Esophagus muscularis mucosa (tissue), 4 donors: ENCODE measurements at regions of chr1 and their contacts with region 1.

Region 1: DNA sequence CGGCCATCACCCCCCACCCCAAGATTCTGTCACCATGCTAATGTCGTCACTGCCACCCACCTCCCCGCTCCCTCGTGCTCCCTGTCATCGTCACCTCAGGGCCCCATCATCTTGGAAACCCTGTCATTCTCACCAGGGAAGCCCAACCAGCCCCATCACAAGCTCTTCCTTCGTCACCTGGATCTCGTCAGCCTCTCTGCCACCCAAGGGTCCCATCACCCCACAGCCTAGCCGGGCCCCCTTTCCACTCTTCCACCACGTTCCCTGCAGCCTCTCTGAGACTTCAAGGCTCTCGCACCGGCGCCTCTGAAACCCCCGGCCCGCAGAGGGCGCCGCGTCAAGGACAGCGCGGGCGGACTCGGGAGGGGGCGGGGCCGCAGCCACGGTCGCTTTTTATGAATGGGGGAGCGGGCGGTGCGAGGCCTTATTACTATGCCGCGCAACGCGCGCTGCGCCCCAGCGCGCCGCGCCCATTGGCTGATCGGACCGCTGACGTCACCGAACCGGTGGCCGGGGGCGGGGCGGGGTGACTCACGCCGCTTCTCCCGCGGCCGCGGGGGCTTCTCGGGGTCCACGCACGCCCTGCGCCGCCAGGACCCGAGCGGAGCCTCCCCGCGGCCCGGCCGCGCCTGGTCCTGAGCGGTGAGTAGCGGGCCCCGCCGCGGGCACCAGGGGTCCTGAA is at the start of gene GPR3:
- DNase-seq: peak; percentile 98
- H3K4me3 ChIP-seq: peak within 1 kb of the TSS; percentile 55 to 68 (median 58)
- H3K27ac ChIP-seq: peak within 1 kb of the TSS; percentile 66 to 77 (median 70)
- H3K4me1 ChIP-seq: peaks cover 32 to 50% (median 38%) of the 10 kb centered on the region in 4 donors
- H3K27me3 ChIP-seq: no peaks in the 10 kb centered on the region
- CTCF ChIP-seq: peak; percentile 53 to 75 (median 56)
- EP300 ChIP-seq: no peak
- POLR2A ChIP-seq: no peak
- total RNA-seq, gene GPR3: 0.13 to 4.5 TPM in 2 of 4 donors, not detected in the others

Region 2: GRCh38 chr1:27300341-27301051 is 91.7 kb before region 1 on chr1:
- intact Hi-C with region 1: loop called (anchors 1 kb)
- DNase-seq: peak; percentile 95
- H3K4me3 ChIP-seq: no peak overlapping the region
- H3K27ac ChIP-seq: peak overlapping the region; percentile 87 to 96 (median 92)
- H3K4me1 ChIP-seq: peaks cover 34 to 50% (median 48%) of the 10 kb centered on the region in 4 donors
- H3K27me3 ChIP-seq: no peaks in the 10 kb centered on the region
- CTCF ChIP-seq: peak in 2 of 3 experiments; percentile 98 to 100
- EP300 ChIP-seq: no peak
- POLR2A ChIP-seq: no peak

Region 3: GRCh38 chr1:27332536-27333281 is 59.5 kb before region 1 on chr1:
- intact Hi-C with region 1: loop called (anchors 10 kb)
- DNase-seq: no peak
- H3K4me3 ChIP-seq: no peak overlapping the region
- H3K27ac ChIP-seq: no peak overlapping the region
- H3K4me1 ChIP-seq: peaks cover 3 to 30% (median 19%) of the 10 kb centered on the region in 4 donors
- H3K27me3 ChIP-seq: no peaks in the 10 kb centered on the region
- CTCF ChIP-seq: peak; percentile 70 to 90 (median 71)
- EP300 ChIP-seq: no peak
- POLR2A ChIP-seq: no peak

Region 4: DNA sequence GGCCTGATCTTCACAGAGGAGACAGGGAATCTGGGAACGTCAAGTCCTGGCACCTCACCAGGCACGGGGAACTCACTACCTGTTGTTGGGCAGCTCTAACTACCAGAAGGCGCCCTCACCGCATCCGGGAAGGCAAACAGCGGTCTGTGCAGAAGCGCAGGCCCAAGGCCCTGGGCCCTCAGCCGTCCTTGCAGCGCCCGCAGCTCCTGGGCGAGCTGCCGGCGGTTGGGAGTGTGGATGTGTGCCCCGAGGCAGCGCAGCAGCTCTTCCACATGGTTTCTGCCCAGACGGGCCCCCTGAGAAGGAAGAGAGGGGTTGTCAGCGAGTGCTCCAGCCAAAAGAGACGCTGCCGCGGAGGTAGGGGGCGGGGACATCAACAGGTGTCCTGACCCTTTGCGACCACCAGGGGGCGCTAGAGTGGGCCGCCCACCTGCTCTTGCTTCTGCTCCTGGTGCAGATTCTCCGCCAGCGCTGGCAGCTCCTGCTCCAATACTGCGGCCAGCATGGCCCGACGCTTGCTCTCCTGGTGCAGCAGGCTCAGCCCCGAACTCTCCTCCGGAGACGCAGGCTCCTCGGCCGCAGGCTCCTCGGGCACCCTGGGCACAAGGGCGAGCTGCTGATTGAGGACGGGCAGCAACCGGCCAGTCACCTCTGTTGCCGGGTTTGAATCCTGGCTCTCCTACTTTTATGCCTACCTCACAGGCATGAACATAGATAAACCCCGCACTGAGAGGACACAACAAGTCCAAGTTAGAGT is 34.8 kb before region 1 on chr1:
- intact Hi-C with region 1: loop called (anchors 1 kb)
- DNase-seq: no peak
- H3K4me3 ChIP-seq: peak overlapping the region in 2 of 4 donors; percentile 16 to 29
- H3K27ac ChIP-seq: peak overlapping the region in 1 of 4 donors; percentile 22
- H3K4me1 ChIP-seq: peaks cover 18 to 30% (median 27%) of the 10 kb centered on the region in 4 donors
- H3K27me3 ChIP-seq: no peaks in the 10 kb centered on the region
- CTCF ChIP-seq: peak; percentile 95 to 98 (median 97)
- EP300 ChIP-seq: no peak
- POLR2A ChIP-seq: no peak

Region 5: DNA sequence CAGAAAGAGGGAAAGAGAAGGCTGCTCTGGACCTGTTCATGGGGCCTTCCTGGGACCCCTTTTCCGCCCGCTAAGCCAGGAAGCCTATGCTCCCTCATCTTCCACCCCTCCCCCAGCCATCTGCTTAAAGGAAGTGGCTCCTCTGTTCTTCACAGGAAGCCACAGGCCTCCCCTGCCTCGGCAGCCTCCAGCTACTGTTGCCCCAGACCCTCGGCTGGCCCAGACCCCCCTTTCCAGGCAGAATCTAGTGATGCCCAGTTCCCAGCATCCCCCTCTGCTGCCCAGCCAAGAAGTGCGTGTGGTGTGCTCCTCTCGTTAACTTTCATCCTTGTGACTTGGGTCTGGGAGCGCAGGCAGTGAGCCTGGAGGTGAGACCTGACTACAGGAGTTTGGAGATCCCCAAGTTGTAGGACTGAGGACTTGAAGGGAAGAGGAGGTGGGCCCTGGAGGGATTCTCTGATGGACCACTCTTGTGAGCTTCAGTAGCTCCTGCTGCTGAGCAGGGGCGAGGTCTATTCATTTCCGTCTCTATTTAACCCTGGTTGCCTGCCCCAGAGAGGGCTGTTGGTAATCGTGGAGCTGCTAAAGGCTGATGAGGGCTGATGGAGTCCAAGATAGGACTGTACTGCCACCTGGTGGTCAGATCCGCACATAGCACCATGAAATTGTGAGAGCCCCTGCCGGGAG is 270.6 kb after region 1 on chr1:
- intact Hi-C with region 1: loop called (anchors 5 kb)
- DNase-seq: peak; percentile 98
- H3K4me3 ChIP-seq: no peak overlapping the region
- H3K27ac ChIP-seq: peak overlapping the region; percentile 38 to 67 (median 46)
- H3K4me1 ChIP-seq: peaks cover 39 to 48% (median 40%) of the 10 kb centered on the region in 4 donors
- H3K27me3 ChIP-seq: no peaks in the 10 kb centered on the region
- CTCF ChIP-seq: peak; percentile 80 to 99 (median 88)
- EP300 ChIP-seq: no peak
- POLR2A ChIP-seq: no peak